ENCODE measurements at regions of chrX and their contacts with region 1.

Region 1: DNA sequence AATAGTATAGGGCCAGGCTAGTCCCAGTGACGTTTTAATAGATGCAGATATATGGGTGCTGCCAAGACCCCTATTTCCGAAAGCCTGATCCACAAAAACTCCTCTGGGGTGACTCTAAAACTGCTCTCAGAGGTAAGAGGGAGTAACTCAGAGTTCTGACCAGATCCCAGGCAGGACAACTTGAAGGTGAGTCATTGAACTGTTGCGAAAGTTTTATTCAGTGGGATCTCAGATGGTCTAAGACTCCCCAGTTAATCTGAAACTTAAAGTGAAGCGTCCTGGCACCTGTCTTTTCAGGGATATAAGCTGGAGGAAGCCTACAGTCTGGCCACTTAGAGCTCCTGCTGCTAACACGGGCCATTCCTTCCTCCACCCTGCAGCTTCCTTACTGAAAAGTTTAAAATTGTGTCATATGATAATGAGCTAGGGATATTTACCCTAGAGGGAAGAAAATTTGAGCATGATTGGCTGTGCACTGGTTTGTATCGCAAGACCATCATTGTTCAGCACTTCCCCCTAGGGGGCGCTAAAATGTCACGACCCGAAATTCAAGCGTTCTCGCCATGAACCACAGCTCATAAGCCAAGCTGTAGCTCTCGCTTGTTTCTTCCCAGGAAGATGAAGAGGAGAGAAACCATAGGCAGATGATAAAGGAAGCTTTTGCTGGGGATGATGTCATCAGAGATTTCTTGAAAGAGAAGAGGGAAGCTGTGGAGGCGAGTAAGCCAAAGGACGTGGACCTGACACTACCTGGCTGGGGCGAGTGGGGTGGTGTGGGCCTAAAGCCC is 19.5 kb downstream of the UTP14A start:
- DNase-seq: peak; percentile 66
- ATAC-seq: peak; percentile 73
- H3K4me3 Mint-ChIP-seq: no peak overlapping the region
- H3K27ac Mint-ChIP-seq: no peak overlapping the region
- H3K4me1 Mint-ChIP-seq: 0 out of 2 replicates have a peak, but pooled peaks cover under 1% of the 10 kb centered on the region
- H3K27me3 Mint-ChIP-seq: no peaks in the 10 kb centered on the region
- CTCF ChIP-seq: peak; percentile 54

Region 2: GRCh38 chrX:130055103-130055502 is 129.6 kb after region 1 on chrX:
- CTCF ChIA-PET with region 1: interaction called, 23 read pairs
- POLR2A ChIA-PET with region 1: no interaction called
- DNase-seq: no peak
- ATAC-seq: no peak; the same call in 1 of the 2 replicates
- H3K4me3 Mint-ChIP-seq: no peak overlapping the region
- H3K27ac Mint-ChIP-seq: peak overlapping the region; percentile 78
- H3K4me1 Mint-ChIP-seq: peaks cover 15% of the 10 kb centered on the region
- H3K27me3 Mint-ChIP-seq: peaks cover 17% of the 10 kb centered on the region
- CTCF ChIP-seq: no peak

Measured in WTC11 (cell line).